Right ventricle myocardium inferior (tissue), 1 donor: ENCODE measurements at regions of chr6 and their contacts with region 1.

Region 1: DNA sequence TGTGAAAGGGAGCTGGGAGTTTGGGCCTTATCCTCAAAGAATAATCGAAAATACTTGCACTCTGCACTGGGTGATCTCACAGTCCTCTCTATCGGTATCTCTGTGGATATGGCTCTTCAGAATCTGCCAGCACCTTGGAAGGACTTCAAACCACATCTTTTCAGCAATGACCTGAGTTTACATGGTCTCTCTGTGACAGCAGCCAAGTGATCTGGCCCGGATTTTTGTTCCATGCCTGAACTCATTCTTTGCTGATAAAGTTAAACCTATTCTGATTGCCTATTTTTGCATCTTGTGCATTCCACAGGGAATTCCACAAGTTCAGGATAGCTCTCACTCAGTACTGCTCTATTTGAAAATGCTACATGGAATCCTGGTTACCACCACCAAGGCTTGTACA is 98.9 kb downstream of the HDGFL1 start:
- DNase-seq: no peak
- ATAC-seq: peak; percentile 96

Region 2: DNA sequence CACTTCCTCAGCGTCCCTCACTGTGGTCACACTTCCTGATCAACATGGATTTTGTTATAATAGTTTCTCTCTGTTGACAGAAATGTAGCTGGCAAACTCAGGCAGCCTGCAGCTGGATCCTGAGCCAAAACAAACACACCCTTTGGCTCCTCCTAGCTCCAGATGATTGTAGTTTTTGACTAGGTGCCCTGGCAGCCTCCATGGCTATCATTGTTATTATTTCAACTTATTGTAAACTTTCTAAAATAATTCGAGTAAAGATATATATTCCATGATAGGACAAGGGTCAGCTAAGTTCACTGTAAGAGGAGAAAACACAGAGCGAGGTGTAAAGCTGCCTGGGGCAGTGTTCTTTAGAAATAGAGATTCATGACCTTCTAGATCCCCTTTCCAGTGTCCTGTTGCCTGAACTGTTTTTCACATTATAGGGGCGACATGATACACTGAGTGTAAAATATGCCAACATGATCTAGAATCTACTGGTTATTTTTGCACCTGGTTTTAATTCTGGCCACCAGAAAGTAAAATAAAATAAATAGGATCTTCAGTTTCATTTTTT is 197.1 kb before region 1 on chr6:
- intact Hi-C with region 1: loop called (anchors 5 kb)
- DNase-seq: no peak
- ATAC-seq: peak; percentile 82

Region 3: DNA sequence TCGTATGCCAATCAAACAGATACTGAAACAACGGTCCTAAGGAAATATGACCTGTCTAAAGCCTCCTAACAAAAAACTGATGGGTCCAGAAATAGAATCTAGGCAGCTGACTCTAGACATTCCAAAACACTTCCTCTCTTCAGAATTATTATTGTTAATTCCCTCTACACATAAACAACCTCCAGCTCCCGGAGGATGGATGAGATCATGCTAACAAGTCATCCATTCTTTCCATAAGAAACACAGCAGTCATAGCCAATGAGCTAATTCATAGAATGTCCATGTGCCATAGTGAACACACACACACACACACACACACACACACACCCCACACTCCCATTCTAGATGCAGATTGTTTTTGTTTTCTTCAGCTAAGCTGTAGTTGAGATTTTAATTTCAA is 54.6 kb before region 1 on chr6:
- intact Hi-C with region 1: loop called (anchors 5 kb)
- DNase-seq: no peak
- ATAC-seq: no peak

Region 4: DNA sequence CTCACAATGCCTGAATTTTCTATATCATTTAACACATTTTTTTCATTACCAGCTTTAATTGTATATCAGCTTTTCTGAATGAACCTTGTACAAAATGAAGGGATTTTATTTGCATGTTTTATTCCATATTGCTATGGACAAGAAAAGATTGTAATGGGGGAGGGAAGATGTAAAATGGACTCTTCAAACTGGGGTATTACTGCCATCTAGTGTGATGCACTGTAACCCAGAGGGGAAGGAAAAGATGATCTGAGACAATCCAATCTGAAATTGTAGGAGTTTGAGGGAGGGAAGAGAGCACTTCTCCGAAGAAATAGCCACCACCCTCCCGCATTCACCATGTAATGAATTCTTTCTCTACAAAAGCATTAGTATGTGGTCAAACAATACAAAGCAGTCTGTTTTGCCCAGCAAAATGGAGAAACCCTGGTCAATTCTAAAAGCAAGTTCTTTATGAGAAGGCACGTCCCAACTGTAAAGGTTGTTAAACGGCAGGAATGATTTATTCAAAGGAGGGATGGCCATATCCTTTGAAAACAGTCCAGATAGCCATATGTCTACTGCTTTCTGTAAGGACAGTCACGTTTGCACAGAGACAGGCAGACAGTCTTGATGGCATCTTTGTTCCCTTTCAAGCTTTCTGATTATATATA is 778.2 kb after region 1 on chr6:
- intact Hi-C with region 1: loop called (anchors 5 kb)
- DNase-seq: no peak
- ATAC-seq: peak; percentile 81